AG04450 (cell line): ENCODE measurements at regions of chr6 and their contacts with region 1.

Region 1: GRCh38 chr6:56902641-56903464 is 52.1 kb upstream of the BEND6 start:
- DNase-seq: peak; percentile 59
- H3K4me3 ChIP-seq: no peak overlapping the region; the same call in 1 of the 2 replicates
- H3K27ac ChIP-seq: peak overlapping the region; percentile 33
- H3K27me3 ChIP-seq: no peaks in the 10 kb centered on the region
- CTCF ChIP-seq: peak; percentile 77

Region 2: DNA sequence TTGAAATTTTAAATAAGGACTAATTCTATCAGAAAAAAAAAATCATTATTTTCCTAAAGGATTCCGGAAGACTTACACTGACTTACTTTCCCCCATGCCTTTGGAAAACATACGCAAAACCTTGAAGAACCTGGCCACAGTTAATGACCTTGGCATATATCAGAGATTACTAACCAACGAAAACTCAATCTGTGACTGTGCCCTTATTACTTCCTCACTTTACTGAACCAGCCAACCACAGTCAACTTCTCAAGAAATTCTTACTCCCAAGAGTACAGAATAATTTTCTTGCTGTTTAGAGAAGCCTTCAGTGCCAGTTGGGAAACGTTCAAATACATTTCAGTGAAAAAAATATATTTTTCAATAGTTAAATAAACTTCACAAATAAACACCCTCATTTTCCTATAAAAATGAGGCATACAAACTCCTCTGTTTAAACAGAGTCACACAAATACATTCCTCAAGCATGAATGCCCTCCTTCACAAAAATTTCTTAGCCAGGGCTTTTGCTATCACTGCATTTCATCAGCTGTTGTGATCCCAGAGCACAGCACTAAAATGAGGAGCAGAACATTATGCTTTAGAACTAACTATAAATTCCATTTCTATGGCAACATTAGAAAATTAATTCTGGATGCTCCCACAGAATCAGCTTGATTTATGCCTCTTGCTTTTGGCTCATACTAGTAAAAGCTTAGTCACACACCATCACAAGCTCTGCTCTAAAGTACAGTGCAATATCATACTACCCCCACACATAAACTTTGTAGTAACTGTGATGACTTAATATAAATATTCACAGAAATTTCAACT is 377.8 kb before region 1 on chr6:
- CTCF ChIA-PET with region 1: no interaction called
- POLR2A ChIA-PET with region 1: no interaction called
- DNase-seq: peak; percentile 84
- H3K4me3 ChIP-seq: no peak overlapping the region
- H3K27ac ChIP-seq: peak overlapping the region; percentile 75
- H3K27me3 ChIP-seq: no peaks in the 10 kb centered on the region
- CTCF ChIP-seq: no peak

Region 3: DNA sequence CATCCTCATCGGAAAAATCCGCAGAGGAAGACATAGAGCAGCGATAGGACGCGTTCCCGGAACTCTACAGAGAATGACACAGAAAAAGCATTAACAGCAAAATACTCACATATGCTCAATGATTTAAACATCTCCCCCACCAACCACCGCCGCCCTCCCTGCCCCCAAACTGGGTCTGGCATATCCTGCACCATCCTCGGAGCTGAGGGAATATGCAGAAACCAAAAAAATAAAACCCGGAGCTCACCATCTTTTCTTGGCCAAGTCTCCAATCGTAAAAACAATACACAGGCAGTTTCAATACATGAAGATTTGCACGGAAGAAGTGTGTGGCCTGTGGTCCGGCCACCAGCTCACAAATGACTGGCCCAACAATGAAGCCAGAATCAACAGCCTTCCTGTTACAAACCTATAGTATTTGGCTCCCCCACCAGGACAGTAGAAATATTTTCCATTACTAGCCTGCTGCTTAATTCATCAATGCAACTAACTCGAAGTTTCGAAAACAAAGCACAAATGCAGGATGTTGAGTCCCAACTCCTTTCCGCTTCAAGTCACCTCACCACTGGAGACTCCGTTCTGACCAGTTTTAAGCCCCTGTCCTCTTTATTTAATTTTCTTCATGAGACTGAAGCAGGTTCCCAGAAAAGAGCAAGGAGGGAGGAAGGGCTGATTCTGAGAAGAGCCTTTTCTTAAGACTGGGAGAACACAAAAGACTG is 51.2 kb before region 1 on chr6:
- CTCF ChIA-PET with region 1: interaction called, 18 read pairs
- POLR2A ChIA-PET with region 1: no interaction called
- DNase-seq: peak; percentile 57
- H3K4me3 ChIP-seq: peak overlapping the region; percentile 69
- H3K27ac ChIP-seq: peak overlapping the region; percentile 74
- H3K27me3 ChIP-seq: no peaks in the 10 kb centered on the region
- CTCF ChIP-seq: peak; percentile 69

Region 4: DNA sequence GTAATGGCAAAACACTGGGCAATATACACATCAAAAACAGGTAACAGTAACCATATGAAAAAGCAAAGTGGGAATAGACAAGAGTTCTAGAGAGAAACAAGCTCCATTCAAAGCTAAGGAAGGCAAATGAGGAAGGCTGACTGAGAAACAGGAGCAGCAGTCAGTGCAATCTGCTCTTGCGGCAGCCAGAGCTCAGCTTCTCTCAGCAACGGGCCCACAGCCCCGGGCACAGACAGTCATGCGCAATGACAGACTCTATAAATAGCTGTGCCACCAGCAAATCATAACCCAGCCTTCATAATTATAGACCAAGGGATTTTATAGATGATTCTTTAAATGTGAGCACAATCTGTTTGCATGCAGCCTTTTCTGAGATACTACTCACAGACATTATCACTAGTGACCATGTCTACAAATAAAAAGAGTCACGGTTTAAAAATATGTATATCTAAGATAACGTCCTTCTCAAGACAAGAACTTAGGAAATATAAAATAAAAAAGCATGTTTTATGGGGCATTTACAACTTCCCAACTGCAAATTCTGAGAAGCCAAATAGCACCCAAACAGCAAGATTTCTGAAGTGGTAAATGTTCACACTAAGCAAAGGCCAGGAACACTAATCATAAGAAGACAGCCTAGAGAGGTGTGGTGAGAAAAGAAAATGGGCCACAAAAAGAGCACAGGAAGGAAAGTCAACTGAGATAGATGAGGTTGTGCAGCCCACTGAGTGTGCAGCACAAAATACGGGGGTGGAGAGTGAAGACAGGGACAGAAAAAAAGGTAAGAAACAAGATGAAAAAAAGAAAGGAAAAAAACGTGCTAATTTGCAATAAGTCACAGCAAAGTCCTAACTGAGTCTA is 12.2 kb after region 1 on chr6:
- CTCF ChIA-PET with region 1: interaction called, 33 read pairs
- POLR2A ChIA-PET with region 1: interaction called, 3 read pairs
- DNase-seq: no peak
- H3K4me3 ChIP-seq: no peak overlapping the region
- H3K27ac ChIP-seq: no peak overlapping the region
- H3K27me3 ChIP-seq: no peaks in the 10 kb centered on the region
- CTCF ChIP-seq: no peak

Region 5: DNA sequence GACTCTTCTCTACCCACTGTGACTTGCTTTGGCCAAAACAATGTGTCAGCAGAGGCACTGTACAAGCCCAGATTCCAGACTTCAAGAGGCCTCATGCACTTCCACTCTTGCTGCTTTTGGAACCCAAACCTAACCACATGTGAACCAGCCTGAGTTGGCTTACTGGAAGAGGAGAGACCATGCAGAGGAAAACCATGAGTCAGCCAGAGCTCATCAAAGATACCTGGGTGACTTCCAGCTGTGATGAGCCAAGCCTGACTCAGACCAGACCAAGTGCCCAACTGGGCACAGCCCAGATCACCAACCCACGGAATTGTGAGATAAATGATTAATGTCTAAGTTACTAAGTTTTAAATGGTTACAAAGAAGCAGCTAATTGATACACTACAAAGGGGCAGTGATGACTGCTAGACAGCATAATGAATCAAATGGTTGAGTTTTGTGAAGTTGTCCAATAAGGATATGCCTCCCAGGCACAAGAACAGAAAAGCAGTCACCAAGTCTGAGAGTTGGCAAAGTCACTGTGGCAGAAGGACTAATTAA is 35.9 kb after region 1 on chr6:
- CTCF ChIA-PET with region 1: interaction called, 24 read pairs
- POLR2A ChIA-PET with region 1: no interaction called
- DNase-seq: peak; percentile 88
- H3K4me3 ChIP-seq: no peak overlapping the region
- H3K27ac ChIP-seq: peak overlapping the region; percentile 33
- H3K27me3 ChIP-seq: no peaks in the 10 kb centered on the region
- CTCF ChIP-seq: no peak

Region 6: DNA sequence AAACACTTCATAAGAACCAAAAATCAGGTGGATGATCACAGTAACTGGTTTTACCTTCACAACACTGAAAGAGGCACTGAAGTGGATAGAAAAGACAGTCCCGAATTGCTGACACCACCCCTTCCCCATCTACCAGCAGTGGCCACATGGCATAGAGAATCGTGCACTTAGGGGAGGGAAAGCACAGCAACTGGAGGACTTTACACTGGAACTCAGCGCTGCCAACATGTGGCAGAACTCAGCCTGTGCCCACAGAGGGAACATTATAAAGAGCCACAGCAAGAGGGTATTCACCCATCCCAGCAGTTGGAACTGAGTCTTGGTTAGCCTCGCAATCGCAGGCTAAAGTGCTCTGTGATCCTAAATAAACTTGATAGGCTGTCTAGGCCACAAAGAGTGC is 137.2 kb after region 1 on chr6:
- CTCF ChIA-PET with region 1: interaction called, 15 read pairs
- POLR2A ChIA-PET with region 1: no interaction called
- DNase-seq: no peak
- H3K4me3 ChIP-seq: no peak overlapping the region
- H3K27ac ChIP-seq: no peak overlapping the region
- H3K27me3 ChIP-seq: peaks cover 4% of the 10 kb centered on the region
- CTCF ChIP-seq: no peak

Region 7: DNA sequence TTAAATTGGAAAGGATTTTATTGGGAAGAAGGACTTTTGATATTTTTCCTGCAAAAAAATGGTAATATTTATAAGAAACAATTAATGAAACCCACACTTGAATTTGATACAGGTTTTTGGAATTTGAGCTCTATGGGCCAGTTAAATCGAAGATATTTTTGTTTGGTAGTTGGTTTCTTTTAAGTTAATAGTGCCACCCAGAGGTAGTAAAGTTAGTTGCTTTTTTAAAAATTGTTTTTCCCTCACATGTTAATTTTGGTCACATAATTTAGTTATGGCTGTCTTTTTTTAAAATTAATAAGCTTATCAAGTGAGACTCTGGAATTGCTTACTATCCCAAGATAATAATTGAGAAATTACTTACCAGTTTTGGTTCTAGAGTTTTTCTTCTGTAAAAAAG is 421.7 kb after region 1 on chr6:
- CTCF ChIA-PET with region 1: interaction called, 36 read pairs
- POLR2A ChIA-PET with region 1: no interaction called
- DNase-seq: no peak
- H3K4me3 ChIP-seq: no peak overlapping the region
- H3K27ac ChIP-seq: no peak overlapping the region
- H3K27me3 ChIP-seq: no peaks in the 10 kb centered on the region
- CTCF ChIP-seq: peak; percentile 48